Heart right ventricle (tissue), 16 donors: ENCODE measurements at regions of chr5 and their contacts with region 1.

Region 1: DNA sequence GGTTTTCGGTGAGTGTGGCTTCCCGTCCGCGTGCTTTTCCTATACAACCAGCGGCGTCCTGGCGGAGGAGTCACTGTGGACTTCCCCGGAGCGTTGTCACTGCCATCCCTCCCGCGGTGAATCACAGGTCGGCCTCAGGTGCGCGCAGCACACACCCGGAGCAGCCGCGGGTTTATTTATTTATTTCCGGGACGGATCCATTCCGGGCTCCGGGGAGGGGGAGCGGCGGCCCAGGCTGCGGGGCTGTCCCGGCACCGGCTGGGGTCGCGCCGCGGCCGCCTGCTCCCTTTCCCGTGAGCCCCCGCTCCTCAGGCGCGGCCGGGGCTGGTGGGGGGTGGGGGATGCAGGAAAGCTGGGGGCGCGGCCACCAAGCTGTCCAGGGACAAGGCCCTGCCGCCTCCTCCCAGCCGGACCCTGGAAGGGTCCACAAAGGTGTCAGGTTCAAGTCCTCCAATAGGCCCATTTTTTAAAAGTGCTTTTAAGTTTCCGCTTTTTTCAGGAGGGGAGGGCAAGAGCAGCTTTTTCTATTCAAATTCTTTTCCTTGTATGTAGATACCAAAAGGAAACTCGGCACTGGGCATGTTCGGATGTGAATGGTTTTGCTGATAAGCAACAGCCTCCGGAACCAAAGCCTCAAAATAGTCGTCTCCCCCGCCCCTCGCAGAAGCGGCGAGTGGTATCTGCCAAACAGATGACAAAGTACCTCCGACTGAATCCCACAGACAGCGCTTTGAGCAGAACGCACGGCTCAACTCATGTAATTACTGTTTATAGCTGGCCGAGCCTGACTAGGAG is 192.5 kb downstream of the CD180 start:
- DNase-seq: peak; percentile 80 to 94
- ATAC-seq: peak; percentile 89 to 95 (median 92)
- H3K4me3 ChIP-seq: peak overlapping the region; percentile 38 to 70 (median 60)
- H3K27ac ChIP-seq: peak overlapping the region; percentile 79 to 94 (median 88)
- H3K4me1 ChIP-seq: peaks cover 5 to 64% (median 55%) of the 10 kb centered on the region in 9 donors
- H3K27me3 ChIP-seq: peaks cover 0 to 5% (median 0%) of the 10 kb centered on the region in 7 donors
- CTCF ChIP-seq: no peak

Region 2: DNA sequence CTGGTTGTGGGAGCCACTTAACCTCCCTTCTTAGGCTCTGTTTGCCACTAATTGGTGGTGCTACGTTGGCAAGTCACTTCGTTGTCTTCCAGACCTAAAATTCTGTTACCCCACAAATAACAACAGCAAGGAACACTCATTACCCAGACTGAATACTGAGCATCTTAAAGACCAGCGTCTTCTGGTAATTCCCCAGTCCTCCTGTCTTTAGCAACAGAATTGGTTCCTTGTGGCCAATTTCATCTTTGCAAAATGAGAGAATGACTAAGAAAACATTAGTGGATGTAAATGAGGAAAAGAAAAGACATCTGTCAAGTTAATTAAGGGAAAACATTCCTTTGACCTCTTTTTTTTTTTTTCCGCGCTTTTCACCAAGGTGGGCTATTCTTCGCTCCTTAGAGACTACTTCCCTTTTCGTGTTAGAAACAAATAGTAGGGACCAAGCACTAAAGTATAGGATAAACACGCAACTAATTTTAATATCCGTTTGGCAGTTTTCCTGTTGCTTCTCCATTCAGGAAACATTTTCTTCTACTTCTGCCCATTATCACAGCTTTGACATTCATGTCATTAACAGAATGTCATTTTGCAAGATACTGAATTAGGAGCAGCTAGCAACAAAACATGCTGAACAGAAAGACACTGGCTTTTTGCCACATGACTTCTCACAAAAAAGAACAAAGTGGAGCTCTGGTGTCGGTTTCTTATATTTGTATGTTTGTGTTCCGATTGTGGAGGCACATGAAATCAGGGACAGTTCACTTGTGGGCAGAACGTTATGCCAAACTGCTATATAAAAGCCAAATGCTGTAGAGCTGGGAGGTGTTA is 38.3 kb after region 1 on chr5:
- intact Hi-C with region 1: loop called in 2 of 10 experiments (anchors 5 kb)
- DNase-seq: no peak
- ATAC-seq: peak in 1 of 8 donors; percentile 68
- H3K4me3 ChIP-seq: no peak overlapping the region
- H3K27ac ChIP-seq: peak overlapping the region; percentile 15 to 73 (median 46)
- H3K4me1 ChIP-seq: peaks cover 15 to 97% (median 79%) of the 10 kb centered on the region in 9 donors
- H3K27me3 ChIP-seq: no peaks in the 10 kb centered on the region
- CTCF ChIP-seq: no peak

Region 3: DNA sequence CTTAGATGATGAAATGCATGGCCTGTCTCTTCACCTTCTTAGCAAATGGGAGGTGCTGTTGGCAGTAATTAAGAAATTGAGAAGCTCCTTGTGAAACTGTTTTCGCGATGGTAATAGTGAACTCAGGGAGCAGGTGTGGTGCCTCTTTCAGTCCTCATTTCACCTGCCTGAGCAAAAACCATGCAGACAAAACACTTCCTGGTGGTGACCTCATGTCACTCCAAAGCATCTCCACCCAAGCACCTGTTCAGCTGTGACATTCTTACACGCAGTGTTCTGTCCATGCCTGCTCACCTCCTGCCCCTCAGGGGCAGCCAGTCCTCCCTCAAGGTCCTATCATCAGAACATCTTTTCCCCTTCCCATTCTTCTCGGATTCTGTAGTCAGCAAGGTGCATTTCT is 46.0 kb after region 1 on chr5:
- intact Hi-C with region 1: loop called in 1 of 10 experiments (anchors 5 kb)
- DNase-seq: no peak
- ATAC-seq: no peak
- H3K4me3 ChIP-seq: no peak overlapping the region
- H3K27ac ChIP-seq: peak overlapping the region in 9 of 10 donors; percentile 23 to 64 (median 48)
- H3K4me1 ChIP-seq: peaks cover 6 to 84% (median 52%) of the 10 kb centered on the region in 9 donors
- H3K27me3 ChIP-seq: no peaks in the 10 kb centered on the region
- CTCF ChIP-seq: no peak